AG04450 (cell line): ENCODE measurements at regions of chr1 and their contacts with region 1.

Region 1: GRCh38 chr1:91981996-91982609 is 32.9 kb downstream of the BRDT start:
- DNase-seq: no peak
- H3K4me3 ChIP-seq: no peak overlapping the region
- H3K27ac ChIP-seq: no peak overlapping the region
- H3K27me3 ChIP-seq: peaks cover 3% of the 10 kb centered on the region
- CTCF ChIP-seq: no peak

Region 2: DNA sequence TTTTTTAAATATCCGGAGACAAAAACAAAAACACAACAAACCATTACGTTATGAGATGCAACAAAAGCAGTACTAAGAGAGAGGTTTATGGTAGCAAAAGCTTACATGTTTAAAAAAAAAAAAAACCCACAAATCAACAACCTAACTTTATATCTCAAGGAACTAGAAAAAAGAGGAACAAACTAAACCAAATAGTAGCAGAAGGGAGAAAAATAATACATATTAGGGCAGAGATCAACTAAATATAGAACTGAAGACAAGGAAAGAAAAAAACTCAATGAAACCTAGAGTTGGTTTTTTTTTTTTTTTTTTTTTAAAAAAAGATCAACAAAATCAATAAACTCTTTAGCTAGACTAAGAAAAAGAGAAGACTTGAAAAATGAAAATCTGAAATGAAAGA is 995.1 kb before region 1 on chr1:
- CTCF ChIA-PET with region 1: interaction called, 10 read pairs
- POLR2A ChIA-PET with region 1: no interaction called
- DNase-seq: no peak
- H3K4me3 ChIP-seq: no peak overlapping the region
- H3K27ac ChIP-seq: no peak overlapping the region
- H3K27me3 ChIP-seq: no peaks in the 10 kb centered on the region
- CTCF ChIP-seq: no peak

Region 3: GRCh38 chr1:91997607-91998195 is 15.6 kb after region 1 on chr1:
- CTCF ChIA-PET with region 1: interaction called, 11 read pairs
- POLR2A ChIA-PET with region 1: no interaction called
- DNase-seq: peak; percentile 30
- H3K4me3 ChIP-seq: no peak overlapping the region
- H3K27ac ChIP-seq: no peak overlapping the region
- H3K27me3 ChIP-seq: no peaks in the 10 kb centered on the region
- CTCF ChIP-seq: peak; percentile 68